ENCODE measurements at regions of chr17 and their contacts with region 1.

Region 1: GRCh38 chr17:1532836-1533602 is 16.6 kb upstream of the INPP5K start:
- DNase-seq: peak; percentile 58
- H3K4me3 ChIP-seq: no peak overlapping the region
- H3K27ac ChIP-seq: no peak overlapping the region
- H3K4me1 ChIP-seq: peaks cover 10% of the 10 kb centered on the region
- CTCF ChIP-seq: peak; percentile 76

Region 2: DNA sequence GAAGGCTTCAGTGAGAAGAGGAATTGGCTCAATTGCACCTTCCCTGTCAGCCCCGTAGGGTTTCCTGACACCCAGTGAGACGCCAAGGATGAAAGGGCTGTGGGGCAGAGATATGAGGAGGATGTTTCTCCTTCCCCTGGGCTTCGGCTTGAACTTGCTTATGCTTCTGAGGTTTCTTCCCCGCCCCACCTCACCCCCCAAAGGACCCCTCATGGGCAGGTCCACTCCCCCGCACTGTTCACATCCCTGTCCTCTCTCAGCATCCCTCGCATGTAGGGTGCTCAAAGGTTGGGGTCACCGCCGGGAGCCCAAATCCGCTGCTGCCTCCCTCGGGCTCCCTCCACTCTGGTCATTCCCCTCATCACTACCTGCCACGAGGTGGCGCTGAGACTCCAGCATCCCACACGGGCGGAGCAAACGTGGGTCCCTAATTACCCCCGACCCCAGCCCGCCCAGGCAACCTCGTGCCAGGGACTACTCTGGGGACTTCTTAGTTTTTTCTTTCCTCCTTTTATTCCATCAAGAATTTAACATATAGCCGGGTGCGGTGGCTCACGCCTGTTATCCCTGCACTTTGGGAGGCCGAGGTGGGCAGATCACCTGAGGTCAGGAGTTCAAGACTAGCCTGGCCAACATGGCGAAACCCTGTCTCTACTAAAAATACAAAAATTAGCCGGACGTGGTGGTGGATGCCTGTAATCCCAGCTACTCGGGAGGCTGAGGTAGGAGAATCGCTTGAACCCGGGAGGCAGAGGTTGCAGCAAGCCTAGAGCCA is 256.9 kb before region 1 on chr17:
- CTCF ChIA-PET with region 1: no interaction called
- POLR2A ChIA-PET with region 1: no interaction called
- intact Hi-C with region 1: loop called (anchors 5 kb)
- DNase-seq: peak; percentile 69
- H3K4me3 ChIP-seq: no peak overlapping the region
- H3K27ac ChIP-seq: no peak overlapping the region
- H3K4me1 ChIP-seq: no peaks in the 10 kb centered on the region
- CTCF ChIP-seq: peak; percentile 87

Region 3: DNA sequence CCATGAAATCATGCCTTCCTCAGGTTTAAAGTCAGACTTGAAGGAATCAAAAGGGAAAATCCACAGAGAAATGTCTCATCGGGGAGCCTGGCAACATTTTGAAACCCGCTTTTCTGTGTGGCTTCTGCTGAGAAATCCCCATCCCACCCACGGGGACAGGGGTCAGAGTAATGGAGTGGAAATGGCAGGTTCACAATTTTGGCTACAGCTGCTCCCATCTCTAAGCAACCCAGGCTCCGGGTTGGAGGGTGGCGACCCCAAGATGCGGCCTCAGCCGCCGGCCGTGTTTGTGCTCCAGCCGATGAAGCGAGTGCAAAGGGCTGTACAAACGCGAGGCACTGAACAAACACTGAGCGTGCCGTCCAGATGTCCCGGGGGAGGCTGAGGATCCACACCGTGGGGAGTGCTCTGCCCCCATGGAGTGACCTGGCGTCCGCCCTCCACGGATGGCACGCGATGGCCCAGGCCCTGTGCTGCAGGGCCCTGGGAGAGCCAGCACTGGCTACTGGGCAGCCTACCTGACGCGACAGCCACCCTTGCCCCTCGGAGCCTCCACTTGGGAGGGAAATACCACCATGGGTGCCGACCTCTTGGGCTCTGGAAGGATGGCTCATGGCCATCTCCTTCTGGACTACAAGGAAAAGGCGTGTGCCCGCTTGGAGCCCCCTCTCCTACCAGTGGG is 73.5 kb after region 1 on chr17:
- CTCF ChIA-PET with region 1: no interaction called
- POLR2A ChIA-PET with region 1: no interaction called
- intact Hi-C with region 1: no loop called
- DNase-seq: no peak
- H3K4me3 ChIP-seq: no peak overlapping the region
- H3K27ac ChIP-seq: no peak overlapping the region
- H3K4me1 ChIP-seq: peaks cover 20% of the 10 kb centered on the region
- CTCF ChIP-seq: no peak